CD4-positive, alpha-beta memory T cell (primary cell): ENCODE measurements at regions of chr11 and their contacts with region 1.

Region 1: GRCh38 chr11:7688238-7688826 is 15.0 kb upstream of the CYB5R2 start:
- DNase-seq: peak in 2 of 5 donors; percentile 16 to 27
- H3K4me3 ChIP-seq: no peak overlapping the region
- H3K4me3 Mint-ChIP-seq: no peak overlapping the region
- H3K27ac ChIP-seq: no peak overlapping the region
- H3K27ac Mint-ChIP-seq: no peak overlapping the region
- H3K4me1 ChIP-seq: no peaks in the 10 kb centered on the region
- H3K4me1 Mint-ChIP-seq: no peaks in the 10 kb centered on the region
- H3K27me3 ChIP-seq: no peaks in the 10 kb centered on the region
- H3K27me3 Mint-ChIP-seq: peaks cover 17 to 25% of the 10 kb centered on the region in 2 donors

Region 2: GRCh38 chr11:7098235-7098832 is 590.0 kb before region 1 on chr11:
- CTCF ChIA-PET with region 1: interaction called, 16 read pairs
- POLR2A ChIA-PET with region 1: no interaction called
- intact Hi-C with region 1: no loop called
- DNase-seq: peak; percentile 32 to 47 (median 39)
- H3K4me3 ChIP-seq: no peak overlapping the region
- H3K4me3 Mint-ChIP-seq: no peak overlapping the region
- H3K27ac ChIP-seq: no peak overlapping the region
- H3K27ac Mint-ChIP-seq: no peak overlapping the region
- H3K4me1 ChIP-seq: no peaks in the 10 kb centered on the region
- H3K4me1 Mint-ChIP-seq: no peaks in the 10 kb centered on the region
- H3K27me3 ChIP-seq: no peaks in the 10 kb centered on the region
- H3K27me3 Mint-ChIP-seq: peaks cover 5 to 11% of the 10 kb centered on the region in 2 donors

Region 3: DNA sequence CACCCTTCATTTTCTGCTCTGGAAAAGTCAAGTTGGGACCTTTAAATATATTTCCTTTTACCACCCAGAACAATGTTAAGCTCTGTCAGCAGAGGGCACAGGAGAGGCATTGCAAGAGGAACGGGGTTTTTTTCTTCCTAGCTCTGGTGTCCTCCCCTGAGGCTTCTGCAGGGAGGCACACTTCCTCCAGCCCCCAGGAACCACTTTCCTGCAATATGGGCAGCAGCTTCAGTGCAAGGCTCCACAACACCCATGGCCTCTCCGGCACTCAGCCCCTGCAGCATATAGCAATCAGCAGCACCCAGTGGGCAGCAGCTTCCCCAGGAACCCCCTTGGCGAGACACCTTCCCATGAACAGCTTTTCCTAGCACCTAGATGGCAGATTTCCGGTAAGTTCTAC is 335.2 kb before region 1 on chr11:
- CTCF ChIA-PET with region 1: no interaction called
- POLR2A ChIA-PET with region 1: no interaction called
- intact Hi-C with region 1: loop called (anchors 5 kb)
- DNase-seq: peak in 4 of 5 donors; percentile 9 to 15 (median 14)
- H3K4me3 ChIP-seq: no peak overlapping the region
- H3K4me3 Mint-ChIP-seq: no peak overlapping the region
- H3K27ac ChIP-seq: no peak overlapping the region
- H3K27ac Mint-ChIP-seq: no peak overlapping the region
- H3K4me1 ChIP-seq: no peaks in the 10 kb centered on the region
- H3K4me1 Mint-ChIP-seq: no peaks in the 10 kb centered on the region
- H3K27me3 ChIP-seq: no peaks in the 10 kb centered on the region
- H3K27me3 Mint-ChIP-seq: peaks cover 2 to 12% of the 10 kb centered on the region in 2 donors

Region 4: GRCh38 chr11:7577291-7578190 is 110.8 kb before region 1 on chr11:
- CTCF ChIA-PET with region 1: no interaction called
- POLR2A ChIA-PET with region 1: no interaction called
- intact Hi-C with region 1: no loop called
- DNase-seq: peak in 2 of 5 donors; percentile 18
- H3K4me3 ChIP-seq: no peak overlapping the region
- H3K4me3 Mint-ChIP-seq: peak overlapping the region; percentile 3 to 81 (median 67)
- H3K27ac ChIP-seq: no peak overlapping the region
- H3K27ac Mint-ChIP-seq: peak overlapping the region; percentile 27 to 55 (median 37)
- H3K4me1 ChIP-seq: peaks cover 34% of the 10 kb centered on the region
- H3K4me1 Mint-ChIP-seq: peaks cover 27 to 43% (median 36%) of the 10 kb centered on the region in 4 donors
- H3K27me3 ChIP-seq: no peaks in the 10 kb centered on the region
- H3K27me3 Mint-ChIP-seq: peaks cover 2 to 8% of the 10 kb centered on the region in 2 donors

Region 5: GRCh38 chr11:7677071-7677470 is 11.3 kb before region 1 on chr11:
- CTCF ChIA-PET with region 1: interaction called, 16 read pairs
- POLR2A ChIA-PET with region 1: interaction called, 3 read pairs
- intact Hi-C with region 1: no loop called
- DNase-seq: no peak
- H3K4me3 ChIP-seq: no peak overlapping the region
- H3K4me3 Mint-ChIP-seq: no peak overlapping the region
- H3K27ac ChIP-seq: no peak overlapping the region
- H3K27ac Mint-ChIP-seq: no peak overlapping the region
- H3K4me1 ChIP-seq: peaks cover 14% of the 10 kb centered on the region
- H3K4me1 Mint-ChIP-seq: peaks cover 5 to 18% (median 11%) of the 10 kb centered on the region in 4 donors
- H3K27me3 ChIP-seq: peaks cover 7% of the 10 kb centered on the region
- H3K27me3 Mint-ChIP-seq: peaks cover 41 to 59% of the 10 kb centered on the region in 2 donors

Region 6: DNA sequence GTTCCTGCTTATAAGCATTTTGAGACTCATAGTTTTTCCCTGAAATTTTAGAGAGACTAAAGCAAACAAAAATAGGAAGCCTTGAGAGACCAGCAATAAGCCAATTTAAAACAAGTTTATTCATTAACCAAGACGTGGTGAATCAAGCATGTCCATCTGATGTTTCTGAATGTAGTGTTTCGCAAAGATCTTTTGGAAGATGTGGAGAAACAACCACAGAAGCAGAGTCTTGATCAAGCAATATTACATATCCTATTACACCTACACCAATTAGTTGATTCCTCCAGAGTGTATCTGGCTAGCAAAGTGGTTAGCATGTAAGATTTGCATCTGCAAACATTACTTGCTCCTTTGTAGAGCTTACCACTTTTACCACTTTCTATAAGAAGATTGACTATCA is 18.0 kb after region 1 on chr11 and contains the start of gene OVCH2:
- CTCF ChIA-PET with region 1: interaction called, 10 read pairs
- POLR2A ChIA-PET with region 1: no interaction called
- intact Hi-C with region 1: no loop called
- DNase-seq: no peak
- H3K4me3 ChIP-seq: no peak within 1 kb of the TSS
- H3K4me3 Mint-ChIP-seq: no peak within 1 kb of the TSS
- H3K27ac ChIP-seq: no peak within 1 kb of the TSS
- H3K27ac Mint-ChIP-seq: no peak within 1 kb of the TSS
- H3K4me1 ChIP-seq: no peaks in the 10 kb centered on the region
- H3K4me1 Mint-ChIP-seq: no peaks in the 10 kb centered on the region
- H3K27me3 ChIP-seq: peaks cover 3% of the 10 kb centered on the region
- H3K27me3 Mint-ChIP-seq: peaks cover 20 to 29% of the 10 kb centered on the region in 2 donors
- total RNA-seq, gene OVCH2: not detected

Region 7: GRCh38 chr11:8006349-8006977 is 318.1 kb after region 1 on chr11:
- CTCF ChIA-PET with region 1: no interaction called
- POLR2A ChIA-PET with region 1: no interaction called
- intact Hi-C with region 1: no loop called
- DNase-seq: peak; percentile 45 to 60 (median 50)
- H3K4me3 ChIP-seq: no peak overlapping the region
- H3K4me3 Mint-ChIP-seq: no peak overlapping the region
- H3K27ac ChIP-seq: no peak overlapping the region
- H3K27ac Mint-ChIP-seq: peak overlapping the region in 2 of 7 donors; percentile 7 to 39
- H3K4me1 ChIP-seq: no peaks in the 10 kb centered on the region
- H3K4me1 Mint-ChIP-seq: no peaks in the 10 kb centered on the region
- H3K27me3 ChIP-seq: no peaks in the 10 kb centered on the region
- H3K27me3 Mint-ChIP-seq: peaks cover 0 to 4% of the 10 kb centered on the region in 2 donors